Endothelial cell of umbilical vein (primary cell): ENCODE measurements at regions of chrX and their contacts with region 1.

Region 1: DNA sequence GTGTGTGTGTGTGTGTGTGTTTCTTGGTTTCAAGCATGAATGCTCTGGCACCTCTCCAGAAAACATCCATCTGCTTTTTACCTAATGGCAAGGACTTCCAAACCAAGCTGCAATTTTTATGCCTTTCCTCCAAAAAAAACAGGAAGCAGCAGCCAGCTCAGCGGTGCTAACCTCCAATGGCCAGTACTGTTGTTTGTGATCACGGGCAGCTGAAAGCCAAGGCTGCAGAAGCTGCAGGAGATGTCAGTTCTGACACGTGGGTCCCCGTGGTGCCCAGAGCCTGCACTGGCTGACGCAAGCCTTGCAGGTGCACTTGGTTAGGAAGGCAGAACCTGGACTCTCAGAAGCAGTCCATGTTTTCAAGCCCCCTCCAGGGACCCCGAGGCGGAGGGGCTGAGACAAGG is 313.6 kb upstream of the DDX53 start:
- DNase-seq: peak; percentile 92
- H3K4me3 ChIP-seq: no peak overlapping the region
- H3K27ac ChIP-seq: no peak overlapping the region
- H3K4me1 ChIP-seq: no peaks in the 10 kb centered on the region
- H3K27me3 ChIP-seq: no peaks in the 10 kb centered on the region
- CTCF ChIP-seq: no peak
- POLR2A ChIP-seq: no peak

Region 2: GRCh38 chrX:22699581-22700091 is 13.5 kb after region 1 on chrX:
- CTCF ChIA-PET with region 1: no interaction called
- POLR2A ChIA-PET with region 1: interaction called, 4 read pairs
- dilution Hi-C with region 1: no loop called
- intact Hi-C with region 1: loop called (anchors 1 kb)
- DNase-seq: peak; percentile 78
- H3K4me3 ChIP-seq: no peak overlapping the region
- H3K27ac ChIP-seq: peak overlapping the region; percentile 35
- H3K4me1 ChIP-seq: peaks cover 7% of the 10 kb centered on the region
- H3K27me3 ChIP-seq: no peaks in the 10 kb centered on the region
- CTCF ChIP-seq: no peak
- POLR2A ChIP-seq: no peak